Sigmoid colon (tissue), 7 donors: ENCODE measurements at regions of chr2 and their contacts with region 1.

Region 1: DNA sequence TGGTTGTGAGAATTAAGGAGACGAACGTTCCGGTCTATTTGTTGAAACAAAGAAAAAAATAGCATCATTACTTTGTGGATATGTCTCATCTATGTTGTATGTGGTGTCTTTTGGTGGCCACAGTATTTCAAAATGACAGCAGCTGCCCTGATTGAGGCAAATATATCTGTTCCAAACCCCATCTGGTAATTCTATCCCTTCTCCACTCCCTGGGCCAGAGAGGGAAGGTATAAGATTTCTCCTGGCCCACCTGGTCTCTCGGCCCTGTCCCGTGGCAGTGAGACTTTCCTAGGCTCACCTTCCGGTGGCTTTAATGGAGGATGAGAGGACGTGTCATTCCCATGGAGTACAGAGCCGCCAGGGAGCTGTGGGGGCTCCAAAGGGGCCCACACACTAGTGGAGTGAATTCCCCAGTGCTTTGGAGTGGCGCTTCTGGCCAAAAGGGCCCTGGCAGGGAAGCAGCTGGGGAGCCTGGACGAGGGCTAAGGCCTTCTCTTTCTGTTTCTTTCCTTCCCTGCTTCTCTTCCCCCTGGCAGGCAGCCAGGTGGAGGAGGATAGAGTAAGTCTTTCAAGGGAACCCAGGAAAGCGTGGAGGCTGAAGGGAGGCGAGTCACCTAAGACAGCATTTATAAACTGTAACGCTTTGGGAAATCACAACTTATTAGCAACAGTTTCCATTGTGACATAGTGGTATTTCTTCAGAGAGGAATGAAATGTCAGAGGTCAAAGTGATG is 5.6 kb downstream of the FOSL2 start:
- DNase-seq: peak; percentile 86
- H3K4me3 ChIP-seq: peak overlapping the region in 3 of 4 donors; percentile 98 to 99 (median 99)
- H3K27ac ChIP-seq: peak overlapping the region; percentile 97 to 100 (median 100)
- H3K4me1 ChIP-seq: peaks cover 0 to 65% (median 64%) of the 10 kb centered on the region in 4 donors
- H3K27me3 ChIP-seq: no peaks in the 10 kb centered on the region
- CTCF ChIP-seq: no peak
- EP300 ChIP-seq: no peak
- POLR2A ChIP-seq: no peak

Region 2: GRCh38 chr2:28164280-28164801 is 233.9 kb before region 1 on chr2:
- intact Hi-C with region 1: loop called (anchors 2 kb)
- DNase-seq: peak; percentile 67
- H3K4me3 ChIP-seq: peak overlapping the region in 1 of 4 donors; percentile 3
- H3K27ac ChIP-seq: peak overlapping the region; percentile 51 to 86 (median 76)
- H3K4me1 ChIP-seq: peaks cover 0 to 43% (median 39%) of the 10 kb centered on the region in 4 donors
- H3K27me3 ChIP-seq: no peaks in the 10 kb centered on the region
- CTCF ChIP-seq: no peak
- EP300 ChIP-seq: peak in 2 of 4 donors; percentile 34 to 86
- POLR2A ChIP-seq: no peak

Region 3: GRCh38 chr2:28338046-28338817 is 60.0 kb before region 1 on chr2:
- intact Hi-C with region 1: no loop called
- DNase-seq: peak; percentile 94
- H3K4me3 ChIP-seq: no peak overlapping the region
- H3K27ac ChIP-seq: peak overlapping the region; percentile 48 to 73 (median 62)
- H3K4me1 ChIP-seq: peaks cover 0 to 66% (median 50%) of the 10 kb centered on the region in 4 donors
- H3K27me3 ChIP-seq: no peaks in the 10 kb centered on the region
- CTCF ChIP-seq: no peak
- EP300 ChIP-seq: peak in 1 of 4 donors; percentile 65
- POLR2A ChIP-seq: no peak